Endothelial cell of umbilical vein (primary cell): ENCODE measurements at regions of chr7 and their contacts with region 1.

Region 1: DNA sequence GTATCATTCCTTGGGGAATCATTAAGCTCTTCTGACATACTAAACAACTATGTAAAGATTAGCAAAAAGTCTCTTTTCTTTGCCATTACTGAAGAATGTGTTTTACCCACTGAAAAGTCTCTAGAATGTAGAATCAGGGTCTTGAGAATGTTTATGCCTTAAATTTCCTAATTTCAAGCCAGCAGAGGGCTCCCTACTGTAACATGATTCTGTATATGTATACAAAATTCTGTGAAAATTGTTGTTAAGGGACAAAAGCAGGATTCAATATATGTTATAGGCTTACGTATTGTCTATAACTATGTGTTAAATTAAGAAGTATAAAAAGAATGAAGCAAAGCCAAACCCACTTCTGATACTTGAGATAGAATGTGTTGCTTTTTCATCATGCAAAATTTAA is 296.9 kb upstream of the DGKB start:
- DNase-seq: peak; percentile 51
- H3K4me3 ChIP-seq: no peak overlapping the region
- H3K27ac ChIP-seq: no peak overlapping the region
- H3K4me1 ChIP-seq: no peaks in the 10 kb centered on the region
- H3K27me3 ChIP-seq: no peaks in the 10 kb centered on the region
- CTCF ChIP-seq: peak; percentile 15 to 16
- POLR2A ChIP-seq: no peak

Region 2: GRCh38 chr7:15305002-15305600 is 105.6 kb after region 1 on chr7:
- CTCF ChIA-PET with region 1: no interaction called
- POLR2A ChIA-PET with region 1: no interaction called
- dilution Hi-C with region 1: no loop called
- intact Hi-C with region 1: loop called (anchors 5 kb)
- DNase-seq: peak; percentile 65
- H3K4me3 ChIP-seq: no peak overlapping the region
- H3K27ac ChIP-seq: no peak overlapping the region
- H3K4me1 ChIP-seq: no peaks in the 10 kb centered on the region
- H3K27me3 ChIP-seq: no peaks in the 10 kb centered on the region
- CTCF ChIP-seq: peak; percentile 61 to 66
- POLR2A ChIP-seq: no peak